ENCODE measurements at regions of chr11 and their contacts with region 1.

Region 1: DNA sequence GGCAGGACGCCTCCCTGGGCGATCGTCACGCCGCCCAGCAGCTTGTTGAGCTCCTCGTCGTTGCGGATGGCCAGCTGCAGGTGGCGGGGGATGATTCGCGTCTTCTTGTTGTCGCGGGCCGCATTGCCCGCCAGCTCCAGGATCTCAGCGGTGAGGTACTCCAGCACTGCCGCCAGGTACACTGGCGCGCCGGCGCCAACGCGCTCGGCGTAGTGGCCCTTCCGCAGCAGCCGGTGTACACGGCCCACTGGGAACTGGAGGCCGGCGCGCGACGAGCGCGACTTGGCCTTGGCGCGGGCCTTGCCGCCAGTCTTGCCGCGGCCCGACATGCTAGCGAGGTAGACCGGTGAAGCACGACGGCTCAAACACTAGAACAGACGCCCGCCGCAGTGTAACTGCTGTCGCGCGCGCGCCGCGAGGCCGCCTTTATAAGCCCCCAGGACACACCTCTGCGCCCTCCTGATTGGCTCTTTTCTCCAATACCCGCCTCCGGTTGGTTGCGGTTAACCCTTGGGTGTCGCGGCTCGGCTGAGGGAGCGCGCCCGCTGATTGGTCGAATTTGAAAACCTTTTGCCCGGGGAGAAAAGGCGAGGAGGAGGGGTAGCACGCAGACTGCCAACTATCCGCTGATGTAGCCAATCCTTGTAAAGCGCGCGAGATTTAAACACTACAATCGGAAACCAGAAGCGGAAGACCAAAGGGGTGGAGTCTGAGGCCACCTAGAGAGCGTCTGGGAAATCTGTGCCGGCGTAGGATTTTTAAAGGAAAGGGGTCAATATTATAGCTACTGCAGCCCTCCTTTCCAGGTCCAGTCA is 6.4 kb downstream of the DPAGT1 start:
- DNase-seq: peak; percentile 98 to 100 (median 99)
- ATAC-seq: peak; percentile 88
- H3K4me3 ChIP-seq: peak overlapping the region; percentile 86
- H3K4me3 Mint-ChIP-seq: peak overlapping the region; percentile 79
- H3K27ac ChIP-seq: peak overlapping the region; percentile 61 to 62
- H3K27ac Mint-ChIP-seq: peak overlapping the region; percentile 68
- H3K4me1 ChIP-seq: peaks cover 42% of the 10 kb centered on the region
- H3K4me1 Mint-ChIP-seq: peaks cover 37% of the 10 kb centered on the region
- H3K27me3 ChIP-seq: no peaks in the 10 kb centered on the region
- H3K27me3 Mint-ChIP-seq: no peaks in the 10 kb centered on the region
- CTCF ChIP-seq: peak; percentile 29

Region 2: GRCh38 chr11:119018074-119018938 is 77.0 kb before region 1 on chr11 and contains the starts of genes RPS25 and TRAPPC4:
- CTCF ChIA-PET with region 1: no interaction called
- POLR2A ChIA-PET with region 1: interaction called, 10 read pairs
- intact Hi-C with region 1: loop called (anchors 2 kb)
- DNase-seq: peak; percentile 92 to 99 (median 94)
- ATAC-seq: peak; percentile 83
- H3K4me3 ChIP-seq: peak within 1 kb of the TSS; percentile 63
- H3K4me3 Mint-ChIP-seq: peak within 1 kb of the TSS; percentile 100
- H3K27ac ChIP-seq: peak within 1 kb of the TSS; percentile 93
- H3K27ac Mint-ChIP-seq: peak within 1 kb of the TSS; percentile 99
- H3K4me1 ChIP-seq: peaks cover 58% of the 10 kb centered on the region
- H3K4me1 Mint-ChIP-seq: peaks cover 62% of the 10 kb centered on the region
- H3K27me3 ChIP-seq: no peaks in the 10 kb centered on the region
- H3K27me3 Mint-ChIP-seq: no peaks in the 10 kb centered on the region
- CTCF ChIP-seq: no peak
- total RNA-seq, gene RPS25: 2,261 to 2,296 TPM
- total RNA-seq, gene TRAPPC4: 101 to 106 TPM

Region 3: DNA sequence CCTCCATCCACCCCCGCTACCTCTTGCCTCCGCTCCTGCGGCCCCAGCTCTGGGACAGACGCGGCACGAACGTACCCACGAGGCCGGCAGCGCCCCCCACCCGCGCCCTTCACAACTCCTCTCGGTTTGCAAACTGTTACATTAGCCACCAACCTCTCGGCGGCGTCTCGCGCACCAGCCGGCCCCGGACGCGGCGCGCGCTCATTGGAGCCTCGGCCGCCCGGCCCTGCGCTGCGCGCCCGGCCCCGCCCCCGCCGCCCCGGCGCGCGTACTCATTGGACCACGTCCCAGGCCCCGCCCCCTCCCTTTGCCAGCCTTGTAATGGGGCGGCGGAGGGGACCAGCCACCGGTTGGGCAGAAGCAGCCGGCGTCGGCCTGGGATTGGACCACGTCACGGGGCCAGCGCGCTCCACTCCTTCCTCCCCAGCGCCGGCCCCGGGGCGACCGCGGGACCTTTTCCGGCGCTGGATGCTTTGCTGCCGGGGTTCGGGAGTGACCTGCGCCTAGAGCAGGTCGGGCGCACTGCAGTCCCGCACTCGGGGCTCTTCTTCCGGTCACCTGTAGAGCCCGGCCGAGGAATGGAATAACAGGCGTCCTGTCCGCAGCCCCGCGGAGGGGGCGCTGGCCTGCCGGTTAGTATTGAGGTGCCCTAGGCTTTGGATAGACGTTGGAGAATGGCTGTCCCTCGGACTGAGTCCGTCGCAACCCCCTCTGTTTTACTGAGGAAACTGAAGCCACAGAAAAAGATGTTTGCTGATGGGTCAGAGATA is 38.1 kb before region 1 on chr11 and contains the start of gene HYOU1:
- CTCF ChIA-PET with region 1: interaction called, 3 read pairs
- POLR2A ChIA-PET with region 1: interaction called, 20 read pairs
- intact Hi-C with region 1: loop called (anchors 2 kb)
- DNase-seq: peak; percentile 97 to 99 (median 98)
- ATAC-seq: peak; percentile 92
- H3K4me3 ChIP-seq: peak within 1 kb of the TSS; percentile 82
- H3K4me3 Mint-ChIP-seq: peak within 1 kb of the TSS; percentile 99
- H3K27ac ChIP-seq: peak within 1 kb of the TSS; percentile 83 to 84
- H3K27ac Mint-ChIP-seq: peak within 1 kb of the TSS; percentile 80
- H3K4me1 ChIP-seq: peaks cover 32% of the 10 kb centered on the region
- H3K4me1 Mint-ChIP-seq: peaks cover 36% of the 10 kb centered on the region
- H3K27me3 ChIP-seq: no peaks in the 10 kb centered on the region
- H3K27me3 Mint-ChIP-seq: no peaks in the 10 kb centered on the region
- CTCF ChIP-seq: peak; percentile 2
- total RNA-seq, gene HYOU1: 76.5 to 81.4 TPM

Region 4: DNA sequence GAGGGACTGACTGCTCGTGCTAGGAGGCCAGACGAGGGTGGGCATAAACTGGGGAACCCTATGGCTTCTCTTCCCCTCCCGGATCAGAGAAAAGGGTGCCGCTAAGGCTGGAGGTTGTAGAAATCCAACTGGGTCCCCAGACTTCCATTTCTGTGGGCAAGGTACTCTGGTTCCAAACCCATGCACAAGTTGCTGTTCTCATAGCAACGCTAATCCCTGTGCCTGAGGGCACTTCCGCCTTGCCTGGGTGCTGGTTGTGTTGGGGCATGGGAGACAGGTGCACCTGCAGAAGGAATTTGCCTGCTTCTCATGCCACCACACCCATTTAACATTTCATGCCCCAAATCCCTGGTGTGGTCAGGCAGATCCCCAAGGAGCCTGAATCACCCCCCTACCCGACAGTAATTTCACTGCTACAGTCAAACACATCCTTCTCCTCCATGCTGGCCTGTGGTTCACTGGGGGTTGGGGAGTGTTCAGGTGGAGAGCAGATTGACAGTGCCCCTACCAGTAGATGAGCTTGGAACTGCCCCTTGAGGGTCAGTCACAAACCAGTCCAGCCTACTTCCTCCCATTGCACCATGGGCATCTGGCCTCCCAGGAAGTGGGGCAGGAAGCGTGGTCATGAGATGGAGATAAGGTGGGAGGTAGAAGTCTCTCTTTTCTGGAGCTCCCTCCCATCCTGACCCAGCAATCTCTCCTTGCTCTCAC is 13.0 kb after region 1 on chr11:
- CTCF ChIA-PET with region 1: interaction called, 7 read pairs
- POLR2A ChIA-PET with region 1: interaction called, 38 read pairs
- intact Hi-C with region 1: no loop called
- DNase-seq: peak in 8 of 14 experiments; percentile 16 to 64 (median 44)
- ATAC-seq: peak; percentile 51
- H3K4me3 ChIP-seq: peak overlapping the region; percentile 92
- H3K4me3 Mint-ChIP-seq: peak overlapping the region; percentile 81
- H3K27ac ChIP-seq: peak overlapping the region; percentile 43 to 72
- H3K27ac Mint-ChIP-seq: peak overlapping the region; percentile 82
- H3K4me1 ChIP-seq: peaks cover 39% of the 10 kb centered on the region
- H3K4me1 Mint-ChIP-seq: peaks cover 50% of the 10 kb centered on the region
- H3K27me3 ChIP-seq: no peaks in the 10 kb centered on the region
- H3K27me3 Mint-ChIP-seq: no peaks in the 10 kb centered on the region
- CTCF ChIP-seq: no peak

Region 5: GRCh38 chr11:119121008-119121810 is 25.9 kb after region 1 on chr11 and contains the start of gene HINFP:
- CTCF ChIA-PET with region 1: interaction called, 3 read pairs
- POLR2A ChIA-PET with region 1: interaction called, 45 read pairs
- intact Hi-C with region 1: loop called in 1 of 2 experiments (anchors 2 kb)
- DNase-seq: peak; percentile 99 to 100 (median 100)
- ATAC-seq: peak; percentile 96
- H3K4me3 ChIP-seq: peak within 1 kb of the TSS; percentile 92
- H3K4me3 Mint-ChIP-seq: peak within 1 kb of the TSS; percentile 91
- H3K27ac ChIP-seq: peak within 1 kb of the TSS; percentile 75 to 76
- H3K27ac Mint-ChIP-seq: peak within 1 kb of the TSS; percentile 85
- H3K4me1 ChIP-seq: peaks cover 29% of the 10 kb centered on the region
- H3K4me1 Mint-ChIP-seq: peaks cover 47% of the 10 kb centered on the region
- H3K27me3 ChIP-seq: no peaks in the 10 kb centered on the region
- H3K27me3 Mint-ChIP-seq: no peaks in the 10 kb centered on the region
- CTCF ChIP-seq: no peak
- total RNA-seq, gene HINFP: 17.6 to 20.5 TPM

Region 6: DNA sequence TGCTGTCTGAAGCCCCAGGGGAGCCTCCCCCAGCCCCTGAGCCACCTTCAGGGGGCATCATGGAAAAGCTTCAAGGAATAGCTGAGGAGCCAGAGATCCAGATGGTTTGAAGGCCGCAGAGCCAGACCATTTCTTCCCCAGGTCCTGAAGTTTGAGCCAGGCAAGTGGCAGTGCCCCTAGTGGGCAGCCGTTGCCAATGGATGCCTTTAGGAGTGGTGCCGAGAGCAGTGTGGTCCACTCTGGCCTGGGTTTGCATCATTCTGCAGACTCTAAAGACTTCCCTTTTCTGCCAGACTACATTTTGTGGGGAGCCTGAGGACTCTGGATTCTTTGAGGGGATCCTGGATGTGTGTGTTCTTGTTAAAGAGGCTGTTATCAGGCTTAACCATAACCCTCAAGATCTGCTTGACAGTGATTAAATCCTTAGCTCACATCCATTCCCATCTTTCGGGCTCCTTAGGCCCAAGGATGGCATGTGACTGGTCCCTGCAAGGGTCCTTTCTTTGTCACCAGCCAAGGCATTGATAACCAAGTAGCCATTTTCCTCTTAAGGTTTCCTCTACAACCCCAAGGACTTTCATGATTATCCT is 39.2 kb after region 1 on chr11:
- CTCF ChIA-PET with region 1: no interaction called
- POLR2A ChIA-PET with region 1: no interaction called
- intact Hi-C with region 1: no loop called
- DNase-seq: peak in 2 of 14 experiments; percentile 39 to 46
- ATAC-seq: no peak
- H3K4me3 ChIP-seq: no peak overlapping the region
- H3K4me3 Mint-ChIP-seq: no peak overlapping the region
- H3K27ac ChIP-seq: no peak overlapping the region
- H3K27ac Mint-ChIP-seq: no peak overlapping the region
- H3K4me1 ChIP-seq: no peaks in the 10 kb centered on the region
- H3K4me1 Mint-ChIP-seq: no peaks in the 10 kb centered on the region
- H3K27me3 ChIP-seq: no peaks in the 10 kb centered on the region
- H3K27me3 Mint-ChIP-seq: peaks cover 8% of the 10 kb centered on the region
- CTCF ChIP-seq: peak; percentile 18